Activated naive CD8-positive, alpha-beta T cell treated with anti-CD3 and anti-CD28 coated beads, Interleukin-2, amount 10 ng/mL, durations not matched to agents 7 days and 5 days (primary cell): ENCODE measurements at regions of chr7 and their contacts with region 1.

Region 1: DNA sequence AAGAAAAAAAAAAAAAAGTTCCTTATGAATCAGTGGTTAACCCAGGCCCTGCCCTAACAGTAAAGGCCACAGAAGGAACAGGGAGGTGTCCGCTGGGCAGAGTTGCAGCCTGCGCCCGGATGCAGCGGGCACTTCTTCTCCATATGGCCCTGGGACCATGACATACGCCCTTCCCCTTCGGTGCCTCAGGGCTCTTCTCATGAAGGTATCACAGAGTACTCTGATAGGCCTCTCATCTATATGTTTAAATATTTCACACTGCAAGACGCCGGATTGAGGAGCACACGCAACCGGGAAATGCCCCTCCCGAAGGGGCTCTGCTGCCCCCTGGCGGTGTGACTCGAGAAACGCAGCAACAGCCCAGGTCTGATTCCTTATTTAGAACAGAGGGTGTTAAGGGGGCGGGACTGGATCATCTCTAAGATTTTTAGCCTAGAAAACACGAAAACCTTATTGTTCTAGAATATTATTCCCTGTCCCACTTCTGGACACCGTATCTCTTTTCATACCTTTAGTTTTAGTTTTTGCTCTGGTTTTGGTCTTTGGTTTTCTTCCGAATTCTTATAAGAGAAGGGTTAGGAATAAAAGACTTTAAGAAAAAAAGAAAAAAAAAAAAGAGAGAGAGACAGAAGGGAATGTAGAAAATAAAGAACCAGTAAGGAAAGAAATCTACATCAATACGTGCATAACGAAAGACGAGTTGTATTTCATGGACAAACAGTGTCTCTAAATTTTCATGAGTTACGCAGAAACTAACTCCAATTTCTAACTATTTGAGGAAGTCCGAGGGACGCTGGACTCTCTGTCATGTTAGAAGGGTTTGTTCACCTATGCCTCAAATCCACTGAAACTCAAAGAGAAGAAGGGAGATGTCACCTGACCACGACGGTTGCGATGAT is 12.0 kb downstream of the DAGLB start:
- DNase-seq: peak; percentile 96
- ATAC-seq: peak; percentile 82
- H3K4me3 Mint-ChIP-seq: peak overlapping the region; percentile 86
- H3K27ac Mint-ChIP-seq: peak overlapping the region; percentile 96
- H3K4me1 Mint-ChIP-seq: peaks cover 37% of the 10 kb centered on the region
- H3K27me3 Mint-ChIP-seq: no peaks in the 10 kb centered on the region

Region 2: GRCh38 chr7:6447581-6448199 is 12.0 kb after region 1 on chr7 and contains the start of gene DAGLB:
- POLR2A ChIA-PET with region 1: interaction called, 36 read pairs
- DNase-seq: peak; percentile 98
- ATAC-seq: peak; percentile 94
- H3K4me3 Mint-ChIP-seq: peak within 1 kb of the TSS; percentile 91
- H3K27ac Mint-ChIP-seq: peak within 1 kb of the TSS; percentile 94
- H3K4me1 Mint-ChIP-seq: peaks cover 20% of the 10 kb centered on the region
- H3K27me3 Mint-ChIP-seq: no peaks in the 10 kb centered on the region
- total RNA-seq, gene DAGLB: 32.3 to 37.2 TPM

Region 3: GRCh38 chr7:6476596-6477299 is 41.0 kb after region 1 on chr7:
- POLR2A ChIA-PET with region 1: no interaction called
- DNase-seq: no peak
- ATAC-seq: no peak
- H3K4me3 Mint-ChIP-seq: no peak overlapping the region
- H3K27ac Mint-ChIP-seq: peak overlapping the region; percentile 3
- H3K4me1 Mint-ChIP-seq: peaks cover 61% of the 10 kb centered on the region
- H3K27me3 Mint-ChIP-seq: no peaks in the 10 kb centered on the region